A549 (cell line): ENCODE measurements at regions of chr16 and their contacts with region 1.

Region 1: GRCh38 chr16:69049146-69049545 is 56.3 kb upstream of the HAS3 start:
- DNase-seq: peak in 1 of 2 experiments; percentile 43
- ATAC-seq: peak; percentile 78 to 85; a peak in 5 of 6 replicates
- H3K4me3 ChIP-seq: no peak overlapping the region
- H3K27ac ChIP-seq: peak overlapping the region; percentile 75 to 85
- H3K4me1 ChIP-seq: peaks cover 35% of the 10 kb centered on the region
- CTCF ChIP-seq: no peak
- EP300 ChIP-seq: no peak
- POLR2A ChIP-seq: no peak
- RAD21 ChIP-seq: no peak

Region 2: GRCh38 chr16:68972720-68973119 is 76.4 kb before region 1 on chr16:
- CTCF ChIA-PET with region 1: interaction called, 13 read pairs
- POLR2A ChIA-PET with region 1: no interaction called
- DNase-seq: peak; percentile 45 to 71
- ATAC-seq: peak; percentile 95 to 97
- H3K4me3 ChIP-seq: no peak overlapping the region
- H3K27ac ChIP-seq: peak overlapping the region; percentile 12 to 62; a peak in 5 of 6 replicates
- H3K4me1 ChIP-seq: peaks cover 20% of the 10 kb centered on the region
- CTCF ChIP-seq: peak; percentile 34; the same call in 2 of the 3 replicates
- EP300 ChIP-seq: no peak
- POLR2A ChIP-seq: no peak
- RAD21 ChIP-seq: peak; percentile 52 to 64